H1 (cell line): ENCODE measurements at regions of chr16 and their contacts with region 1.

Region 1: GRCh38 chr16:61936522-61936921 is 99.7 kb downstream of the CDH8 start:
- DNase-seq: no peak
- H3K4me3 ChIP-seq: no peak overlapping the region
- H3K27ac ChIP-seq: no peak overlapping the region
- H3K4me1 ChIP-seq: peaks cover 0 to 3% (median 1%) of the 10 kb centered on the region in 4 experiments; a peak in 3 of 7 replicates
- H3K27me3 ChIP-seq: no peaks in the 10 kb centered on the region
- CTCF ChIP-seq: peak; percentile 7 to 60 (median 49)
- EP300 ChIP-seq: no peak
- POLR2A ChIP-seq: no peak
- RAD21 ChIP-seq: peak; percentile 76 to 77

Region 2: GRCh38 chr16:62041401-62041800 is 104.9 kb after region 1 on chr16:
- CTCF ChIA-PET with region 1: interaction called, 33 read pairs
- POLR2A ChIA-PET with region 1: no interaction called
- DNase-seq: no peak
- H3K4me3 ChIP-seq: no peak overlapping the region
- H3K27ac ChIP-seq: no peak overlapping the region
- H3K4me1 ChIP-seq: peaks cover 0 to 7% (median 3%) of the 10 kb centered on the region in 4 experiments; a peak in 2 of 7 replicates
- H3K27me3 ChIP-seq: peaks cover 2 to 25% (median 14%) of the 10 kb centered on the region in 4 experiments
- CTCF ChIP-seq: peak in 2 of 3 experiments; percentile 60 to 64; a peak in 3 of 4 replicates
- EP300 ChIP-seq: no peak
- POLR2A ChIP-seq: no peak
- RAD21 ChIP-seq: peak; percentile 79 to 86

Region 3: GRCh38 chr16:62077998-62078397 is 141.5 kb after region 1 on chr16:
- CTCF ChIA-PET with region 1: interaction called, 66 read pairs
- POLR2A ChIA-PET with region 1: no interaction called
- DNase-seq: peak; percentile 49 to 72
- H3K4me3 ChIP-seq: no peak overlapping the region
- H3K27ac ChIP-seq: no peak overlapping the region
- H3K4me1 ChIP-seq: no peaks in the 10 kb centered on the region
- H3K27me3 ChIP-seq: no peaks in the 10 kb centered on the region
- CTCF ChIP-seq: peak; percentile 86 to 93 (median 91)
- EP300 ChIP-seq: no peak
- POLR2A ChIP-seq: no peak
- RAD21 ChIP-seq: peak; percentile 92 to 93